Uterus (tissue), 4 donors: ENCODE measurements at regions of chr1 and their contacts with region 1.

Region 1: DNA sequence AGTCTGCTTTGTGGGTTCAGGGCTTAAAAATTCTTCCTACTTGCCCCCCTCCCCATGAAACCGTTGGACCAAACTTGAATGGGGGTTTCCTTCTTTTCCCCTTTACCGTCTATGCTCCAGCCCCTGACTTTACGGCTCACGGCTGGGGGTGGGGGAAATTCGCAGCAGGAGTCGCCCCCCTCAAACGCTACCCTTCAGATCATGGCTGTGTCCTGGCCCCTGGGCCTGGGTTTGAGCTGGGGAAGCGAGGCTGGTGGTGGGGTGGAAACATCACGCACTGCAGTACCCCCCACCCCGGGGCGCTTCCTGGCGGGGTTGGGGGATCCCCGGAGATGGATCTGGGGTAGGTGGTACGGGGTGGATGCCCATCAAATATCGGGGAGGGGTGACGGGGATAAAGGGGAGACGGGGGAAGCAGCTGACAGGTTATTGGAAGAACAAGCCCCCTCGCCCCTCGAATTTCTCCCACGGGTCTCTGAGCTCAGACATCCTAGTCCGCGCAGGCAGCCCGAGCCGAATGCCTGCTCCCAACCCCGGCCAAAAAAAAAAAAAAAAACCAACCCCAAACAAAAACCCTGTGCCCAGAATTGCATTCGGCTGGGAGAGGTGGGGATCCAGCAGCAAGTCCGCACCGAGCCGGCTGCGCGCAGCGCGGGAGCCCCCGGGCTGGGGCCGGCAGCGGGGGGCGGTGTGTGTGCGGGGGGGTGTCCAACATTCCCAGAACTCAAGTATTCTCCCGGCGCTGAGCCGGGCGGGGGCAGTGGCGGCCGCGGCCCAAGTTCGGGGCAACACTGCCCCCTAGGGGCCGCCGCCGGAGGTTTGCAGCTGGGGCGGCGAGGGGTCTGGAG is 59.0 kb upstream of the ACOT11 start:
- DNase-seq: peak; percentile 88 to 89
- H3K4me3 ChIP-seq: peak overlapping the region; percentile 57 to 60
- H3K27ac ChIP-seq: peak overlapping the region; percentile 95 to 98
- H3K4me1 ChIP-seq: peaks cover 0 to 10% of the 10 kb centered on the region in 2 donors
- H3K27me3 ChIP-seq: no peaks in the 10 kb centered on the region
- CTCF ChIP-seq: peak; percentile 95 to 99 (median 98)
- POLR2A ChIP-seq: peak in 1 of 2 donors; percentile 34

Region 2: GRCh38 chr1:54121482-54122134 is 367.4 kb before region 1 on chr1:
- intact Hi-C with region 1: loop called (anchors 5 kb)
- DNase-seq: peak; percentile 83 to 89
- H3K4me3 ChIP-seq: peak overlapping the region in 1 of 2 donors; percentile 3
- H3K27ac ChIP-seq: peak overlapping the region; percentile 8 to 22
- H3K4me1 ChIP-seq: no peaks in the 10 kb centered on the region
- H3K27me3 ChIP-seq: no peaks in the 10 kb centered on the region
- CTCF ChIP-seq: peak; percentile 86 to 89 (median 88)
- POLR2A ChIP-seq: no peak

Region 3: GRCh38 chr1:54406339-54407153 is 82.5 kb before region 1 on chr1 and contains the start of gene SSBP3:
- intact Hi-C with region 1: loop called (anchors 2 kb)
- DNase-seq: peak; percentile 89 to 94
- H3K4me3 ChIP-seq: peak within 1 kb of the TSS; percentile 57 to 97
- H3K27ac ChIP-seq: peak within 1 kb of the TSS; percentile 96 to 98
- H3K4me1 ChIP-seq: peaks cover 9 to 12% of the 10 kb centered on the region in 2 donors
- H3K27me3 ChIP-seq: no peaks in the 10 kb centered on the region
- CTCF ChIP-seq: peak in 3 of 4 experiments; percentile 7 to 56 (median 46)
- POLR2A ChIP-seq: peak; percentile 98
- total RNA-seq, gene SSBP3: 19.7 to 125 (median 31.4) TPM